ENCODE measurements at regions of chr2 and their contacts with region 1.

Region 1: GRCh38 chr2:97740590-97741182 is 27.3 kb downstream of the ZAP70 start:
- DNase-seq: peak; percentile 66
- ATAC-seq: peak; percentile 37
- H3K4me3 Mint-ChIP-seq: no peak overlapping the region
- H3K27ac Mint-ChIP-seq: peak overlapping the region; percentile 59
- H3K4me1 Mint-ChIP-seq: peaks cover 52% of the 10 kb centered on the region
- H3K27me3 Mint-ChIP-seq: no peaks in the 10 kb centered on the region
- CTCF ChIP-seq: peak; percentile 85

Region 2: GRCh38 chr2:97718051-97718882 is 22.4 kb before region 1 on chr2:
- CTCF ChIA-PET with region 1: interaction called, 167 read pairs
- POLR2A ChIA-PET with region 1: interaction called, 51 read pairs
- intact Hi-C with region 1: loop called (anchors 5 kb)
- DNase-seq: peak; percentile 91
- ATAC-seq: peak; percentile 67
- H3K4me3 Mint-ChIP-seq: peak overlapping the region; percentile 89
- H3K27ac Mint-ChIP-seq: peak overlapping the region; percentile 100
- H3K4me1 Mint-ChIP-seq: peaks cover 58% of the 10 kb centered on the region
- H3K27me3 Mint-ChIP-seq: no peaks in the 10 kb centered on the region
- CTCF ChIP-seq: no peak

Region 3: GRCh38 chr2:97728091-97728731 is 12.5 kb before region 1 on chr2:
- CTCF ChIA-PET with region 1: interaction called, 167 read pairs
- POLR2A ChIA-PET with region 1: interaction called, 61 read pairs
- intact Hi-C with region 1: no loop called
- DNase-seq: peak; percentile 63
- ATAC-seq: peak; percentile 78
- H3K4me3 Mint-ChIP-seq: no peak overlapping the region
- H3K27ac Mint-ChIP-seq: peak overlapping the region; percentile 86
- H3K4me1 Mint-ChIP-seq: peaks cover 68% of the 10 kb centered on the region
- H3K27me3 Mint-ChIP-seq: no peaks in the 10 kb centered on the region
- CTCF ChIP-seq: no peak

Region 4: DNA sequence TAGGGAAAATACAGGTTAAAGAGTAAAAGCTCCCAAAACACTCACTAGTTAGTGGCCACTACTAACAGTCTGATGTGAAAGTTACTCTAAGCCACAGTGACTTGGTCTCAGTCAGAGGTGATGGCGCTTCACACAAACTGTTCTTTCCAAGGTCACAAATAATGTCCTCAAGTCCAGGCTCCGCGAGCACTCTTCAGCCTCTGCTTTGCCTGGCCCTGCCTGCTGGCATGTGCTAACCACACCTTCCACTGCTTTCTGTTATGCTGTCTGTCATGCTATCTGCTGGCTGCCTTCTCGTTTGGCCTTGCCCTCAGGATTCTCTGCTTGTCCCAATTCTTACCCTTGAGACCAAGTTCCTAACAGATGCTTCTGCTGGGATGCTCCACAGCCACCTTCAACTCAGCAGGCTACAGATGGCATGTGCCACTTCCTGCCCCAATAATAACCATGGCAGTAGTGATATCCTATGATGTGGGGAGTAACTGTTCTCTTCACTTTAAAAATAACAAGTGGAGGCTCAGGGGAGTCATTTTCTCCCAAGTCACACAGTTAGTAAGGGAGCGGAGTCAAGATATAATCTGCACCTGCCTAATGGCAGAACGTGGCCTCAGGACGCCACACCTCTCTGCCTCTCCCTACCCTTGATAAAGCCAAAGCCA is 48.4 kb after region 1 on chr2:
- CTCF ChIA-PET with region 1: no interaction called
- POLR2A ChIA-PET with region 1: no interaction called
- intact Hi-C with region 1: no loop called
- DNase-seq: no peak
- ATAC-seq: no peak
- H3K4me3 Mint-ChIP-seq: no peak overlapping the region
- H3K27ac Mint-ChIP-seq: no peak overlapping the region
- H3K4me1 Mint-ChIP-seq: no peaks in the 10 kb centered on the region
- H3K27me3 Mint-ChIP-seq: no peaks in the 10 kb centered on the region
- CTCF ChIP-seq: no peak